H1 (cell line): ENCODE measurements at regions of chr19 and their contacts with region 1.

Region 1: DNA sequence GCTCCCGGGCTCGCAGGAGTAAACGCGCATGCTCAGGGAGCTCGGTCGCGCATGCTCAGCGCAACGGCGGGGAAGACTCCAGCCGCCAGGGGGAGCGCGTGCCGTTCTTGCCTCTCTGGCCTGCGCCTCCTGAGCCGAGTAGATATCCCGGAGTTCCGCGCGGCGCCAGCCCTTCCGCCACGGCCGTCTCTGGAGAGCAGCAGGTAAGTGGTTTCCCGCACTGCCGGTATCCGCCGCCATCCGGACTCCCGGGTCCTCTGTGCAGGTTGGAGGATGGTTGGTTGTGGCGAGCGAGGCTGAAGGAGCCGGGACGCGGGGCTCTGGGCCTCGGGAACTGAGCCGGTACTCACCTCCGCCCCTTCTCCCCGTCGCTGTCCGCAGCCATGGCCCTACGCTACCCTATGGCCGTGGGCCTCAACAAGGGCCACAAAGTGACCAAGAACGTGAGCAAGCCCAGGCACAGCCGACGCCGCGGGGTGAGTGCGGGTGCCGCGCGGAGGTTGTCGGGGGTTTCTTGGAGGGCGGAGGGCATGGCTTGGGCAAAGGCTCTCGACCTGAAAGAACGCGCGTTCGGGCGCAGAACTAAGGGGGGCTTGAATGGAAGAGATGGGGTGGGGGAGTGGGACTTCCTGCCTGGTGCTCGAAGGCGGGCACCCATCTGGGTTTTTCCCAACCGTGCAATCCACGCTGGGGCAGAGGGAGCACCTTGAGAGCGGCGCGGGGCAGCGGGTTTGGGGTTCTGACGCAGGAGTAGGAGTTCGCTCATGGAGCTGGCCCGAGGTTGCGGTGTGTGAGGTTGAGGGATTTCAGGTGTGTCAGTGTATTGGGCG is at the start of gene RPL36:
- DNase-seq: peak; percentile 90 to 100
- H3K4me3 ChIP-seq: peak within 1 kb of the TSS; percentile 64 to 99 (median 83)
- H3K27ac ChIP-seq: peak within 1 kb of the TSS; percentile 89
- H3K4me1 ChIP-seq: peaks cover 0 to 4% (median 1%) of the 10 kb centered on the region in 4 experiments; a peak in 3 of 7 replicates
- H3K27me3 ChIP-seq: no peaks in the 10 kb centered on the region
- CTCF ChIP-seq: peak; percentile 93 to 100 (median 99)
- EP300 ChIP-seq: no peak; a peak in 1 of 3 replicates
- POLR2A ChIP-seq: peak; percentile 97 to 99
- RAD21 ChIP-seq: peak; percentile 27 to 33; a peak in 3 of 4 replicates
- total RNA-seq, gene RPL36: 1,075 and 1,137 TPM in 2 replicates

Region 2: DNA sequence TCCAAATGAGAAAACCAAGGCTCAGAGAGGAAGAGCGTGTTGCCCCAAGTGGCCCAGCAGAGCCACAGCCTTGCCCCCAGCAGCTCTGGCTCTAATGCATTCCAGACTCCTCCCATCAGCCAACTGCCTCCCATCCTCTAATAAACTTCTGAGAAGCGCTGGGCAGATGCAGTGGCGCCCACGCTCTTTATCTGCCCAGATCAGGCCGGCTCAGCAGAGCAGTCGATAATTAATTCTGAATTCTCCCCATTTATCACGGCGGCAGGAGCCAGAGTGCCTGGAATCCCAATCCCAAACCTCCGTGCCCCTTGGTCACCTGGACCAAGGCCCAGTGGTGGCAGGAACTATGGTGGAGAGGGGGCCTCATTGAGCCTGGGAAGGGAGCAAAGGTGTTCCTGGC is 136.4 kb before region 1 on chr19:
- CTCF ChIA-PET with region 1: no interaction called
- POLR2A ChIA-PET with region 1: no interaction called
- DNase-seq: no peak
- H3K4me3 ChIP-seq: no peak overlapping the region
- H3K27ac ChIP-seq: no peak overlapping the region
- H3K4me1 ChIP-seq: peaks cover 0 to 2% (median 0%) of the 10 kb centered on the region in 4 experiments; a peak in 2 of 7 replicates
- H3K27me3 ChIP-seq: no peaks in the 10 kb centered on the region
- CTCF ChIP-seq: no peak
- EP300 ChIP-seq: no peak
- POLR2A ChIP-seq: no peak
- RAD21 ChIP-seq: no peak

Region 3: DNA sequence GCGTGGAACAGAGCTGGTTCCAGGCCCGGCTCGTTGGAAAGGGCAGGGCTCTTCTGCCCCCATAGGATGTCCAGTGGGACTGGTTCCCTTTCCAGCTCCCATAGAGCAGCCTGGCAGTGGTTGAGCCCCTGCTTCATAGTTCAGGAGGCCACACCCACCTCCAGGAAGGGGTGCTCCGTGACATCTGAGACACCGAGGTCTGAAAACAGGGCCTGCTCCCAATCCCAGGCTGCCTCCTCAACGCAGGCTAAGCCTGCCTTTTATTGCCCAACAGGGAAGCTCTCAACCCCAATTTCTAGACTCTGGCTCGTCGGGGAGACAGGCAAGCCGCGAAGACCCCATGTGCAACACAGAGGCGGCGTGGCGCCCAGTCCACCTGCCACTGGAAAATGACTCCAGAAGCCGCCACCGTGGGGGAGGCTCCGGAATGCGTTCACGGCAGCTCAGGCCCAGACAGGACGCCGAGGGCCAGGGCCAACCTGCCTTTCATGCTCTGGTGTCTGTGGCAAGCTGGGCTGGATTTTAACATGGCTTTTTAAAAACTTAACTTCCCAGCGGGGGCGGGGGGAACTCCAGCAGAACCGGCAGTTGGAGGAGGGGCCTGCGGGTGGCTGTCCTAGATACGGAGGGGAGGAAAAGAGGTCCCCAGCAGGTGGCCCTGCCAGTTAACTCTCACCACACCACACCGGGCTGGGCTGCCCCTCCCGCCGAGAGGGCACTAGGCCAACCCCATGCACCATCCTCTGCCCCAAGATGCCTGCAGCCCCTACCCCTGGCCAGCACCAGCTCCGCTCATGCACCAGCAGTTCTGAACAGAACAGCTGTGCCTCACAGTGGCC is 104.7 kb before region 1 on chr19:
- CTCF ChIA-PET with region 1: no interaction called
- POLR2A ChIA-PET with region 1: interaction called, 16 read pairs
- DNase-seq: peak in 1 of 2 experiments; percentile 85
- H3K4me3 ChIP-seq: peak overlapping the region in 3 of 4 experiments; percentile 6 to 52 (median 24); a peak in 4 of 8 replicates
- H3K27ac ChIP-seq: no peak overlapping the region; the same call in 1 of the 2 replicates
- H3K4me1 ChIP-seq: peaks cover 0 to 21% (median 16%) of the 10 kb centered on the region in 4 experiments; a peak in 6 of 7 replicates
- H3K27me3 ChIP-seq: no peaks in the 10 kb centered on the region
- CTCF ChIP-seq: no peak
- EP300 ChIP-seq: no peak
- POLR2A ChIP-seq: no peak
- RAD21 ChIP-seq: no peak

Region 4: DNA sequence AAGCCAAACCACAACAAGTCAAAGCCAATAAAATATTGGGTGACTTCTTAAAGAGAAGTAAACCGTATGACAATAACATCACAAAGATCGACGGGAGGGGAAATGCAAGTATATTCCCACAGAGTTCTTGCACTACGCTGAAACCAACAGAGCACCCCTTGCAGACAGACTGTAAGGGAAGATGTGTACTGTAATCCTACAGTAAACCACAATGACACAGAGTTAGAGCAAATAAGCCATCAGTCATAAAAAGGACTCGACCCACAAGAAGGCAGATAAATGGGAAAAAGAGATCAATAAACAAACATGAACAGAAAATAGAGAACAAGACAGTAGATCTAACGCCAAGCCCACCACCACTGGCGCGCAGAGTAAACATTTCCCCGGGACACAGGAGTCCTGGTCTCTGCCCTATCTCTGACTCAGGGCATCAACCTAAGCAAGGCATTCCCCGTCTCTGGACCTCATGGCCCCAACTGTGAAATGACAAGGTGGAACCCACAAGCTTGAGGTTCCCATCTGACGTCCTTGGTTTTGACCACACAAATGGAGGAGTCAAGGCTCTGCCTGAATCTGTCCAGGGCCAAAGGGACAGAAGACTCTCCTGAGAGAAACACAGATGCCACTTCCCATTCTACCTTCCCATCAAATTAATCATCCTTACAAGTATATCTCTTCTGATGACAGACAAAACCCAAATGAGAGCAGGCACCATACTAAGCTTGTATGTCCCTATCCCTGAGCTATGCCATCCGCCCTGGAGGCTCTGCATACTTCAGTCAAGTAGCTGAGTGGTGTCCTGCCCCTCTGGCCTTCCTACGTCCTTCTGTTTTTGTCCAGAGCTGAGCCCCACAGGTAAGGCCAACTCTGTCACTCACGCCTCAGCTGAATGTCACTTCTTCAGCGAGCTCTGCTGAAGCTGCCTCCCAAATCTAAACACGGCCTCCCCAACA is 82.7 kb before region 1 on chr19:
- CTCF ChIA-PET with region 1: no interaction called
- POLR2A ChIA-PET with region 1: no interaction called
- DNase-seq: no peak
- H3K4me3 ChIP-seq: no peak overlapping the region
- H3K27ac ChIP-seq: no peak overlapping the region
- H3K4me1 ChIP-seq: no peaks in the 10 kb centered on the region
- H3K27me3 ChIP-seq: no peaks in the 10 kb centered on the region
- CTCF ChIP-seq: no peak
- EP300 ChIP-seq: no peak
- POLR2A ChIP-seq: no peak
- RAD21 ChIP-seq: no peak

Region 5: GRCh38 chr19:5665796-5666513 is 24.4 kb before region 1 on chr19:
- CTCF ChIA-PET with region 1: interaction called, 11 read pairs
- POLR2A ChIA-PET with region 1: interaction called, 16 read pairs
- DNase-seq: no peak
- H3K4me3 ChIP-seq: no peak overlapping the region
- H3K27ac ChIP-seq: no peak overlapping the region
- H3K4me1 ChIP-seq: peaks cover 0 to 9% (median 5%) of the 10 kb centered on the region in 4 experiments; a peak in 5 of 7 replicates
- H3K27me3 ChIP-seq: no peaks in the 10 kb centered on the region
- CTCF ChIP-seq: peak in 1 of 3 experiments; percentile 15; a peak in 1 of 4 replicates
- EP300 ChIP-seq: no peak
- POLR2A ChIP-seq: no peak
- RAD21 ChIP-seq: no peak

Region 6: GRCh38 chr19:5707576-5708575 is 17.5 kb after region 1 on chr19:
- CTCF ChIA-PET with region 1: interaction called, 23 read pairs
- POLR2A ChIA-PET with region 1: interaction called, 620 read pairs
- DNase-seq: no peak
- H3K4me3 ChIP-seq: no peak overlapping the region
- H3K27ac ChIP-seq: no peak overlapping the region
- H3K4me1 ChIP-seq: no peaks in the 10 kb centered on the region
- H3K27me3 ChIP-seq: no peaks in the 10 kb centered on the region
- CTCF ChIP-seq: no peak
- EP300 ChIP-seq: no peak
- POLR2A ChIP-seq: no peak; a peak in 1 of 3 replicates
- RAD21 ChIP-seq: no peak

Region 7: GRCh38 chr19:5738426-5738825 is 48.1 kb after region 1 on chr19:
- CTCF ChIA-PET with region 1: interaction called, 3 read pairs
- POLR2A ChIA-PET with region 1: interaction called, 11 read pairs
- DNase-seq: no peak
- H3K4me3 ChIP-seq: no peak overlapping the region
- H3K27ac ChIP-seq: no peak overlapping the region
- H3K4me1 ChIP-seq: no peaks in the 10 kb centered on the region
- H3K27me3 ChIP-seq: no peaks in the 10 kb centered on the region
- CTCF ChIP-seq: no peak
- EP300 ChIP-seq: no peak
- POLR2A ChIP-seq: no peak
- RAD21 ChIP-seq: no peak

Region 8: DNA sequence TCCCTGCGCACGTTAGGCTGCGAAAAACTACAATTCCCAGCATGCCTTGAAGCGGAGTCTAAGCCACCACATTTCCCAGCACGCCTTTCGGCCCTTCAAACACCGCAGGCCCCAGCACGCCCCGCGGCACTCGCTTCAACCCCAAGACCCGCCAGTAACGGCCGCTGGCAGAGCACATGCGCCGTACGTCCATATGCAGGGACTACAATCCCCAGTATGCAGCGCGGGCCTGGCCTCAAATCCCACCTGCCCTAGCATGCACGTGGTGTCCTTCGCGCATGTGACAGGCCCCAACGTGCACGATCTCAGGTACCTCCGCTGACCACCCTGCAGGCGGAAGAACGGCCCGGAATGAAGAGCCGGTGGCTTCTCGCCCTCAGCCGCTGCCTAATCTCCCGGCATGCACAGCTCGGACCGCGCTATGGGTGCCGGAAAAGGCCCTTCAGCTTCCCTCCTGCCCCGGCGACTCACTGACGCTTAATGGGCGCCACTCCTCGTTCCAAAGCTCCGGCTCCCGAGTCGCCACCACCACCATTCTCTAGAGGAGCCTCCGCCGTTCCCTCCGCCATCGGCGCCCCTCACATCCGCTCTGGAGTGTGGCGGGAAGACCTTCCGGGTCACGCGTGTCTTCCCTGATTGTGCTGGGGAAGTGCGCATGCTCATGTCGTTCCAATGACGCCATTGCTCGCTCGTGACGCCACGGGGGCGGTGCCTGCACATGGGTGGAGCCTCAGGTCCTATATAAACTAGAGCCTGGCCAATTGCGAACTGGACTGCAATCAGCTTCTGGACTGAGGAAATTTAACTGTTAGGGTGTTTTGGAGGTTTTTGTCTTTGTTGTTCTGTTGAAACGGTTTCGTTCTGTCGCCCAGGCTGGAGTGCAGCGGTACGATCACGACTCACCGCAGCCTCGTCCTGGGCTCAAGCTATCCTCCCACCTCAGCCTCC is 100.5 kb after region 1 on chr19 and contains the start of gene DUS3L:
- CTCF ChIA-PET with region 1: interaction called, 6 read pairs
- POLR2A ChIA-PET with region 1: interaction called, 18 read pairs
- DNase-seq: peak; percentile 94 to 95
- H3K4me3 ChIP-seq: peak within 1 kb of the TSS; percentile 77 to 92 (median 82)
- H3K27ac ChIP-seq: peak within 1 kb of the TSS; percentile 91
- H3K4me1 ChIP-seq: no peaks in the 10 kb centered on the region; a peak in 1 of 7 replicates
- H3K27me3 ChIP-seq: no peaks in the 10 kb centered on the region
- CTCF ChIP-seq: no peak
- EP300 ChIP-seq: no peak
- POLR2A ChIP-seq: peak in 1 of 2 experiments; percentile 87; a peak in 2 of 3 replicates
- RAD21 ChIP-seq: no peak
- total RNA-seq, gene DUS3L: 39.1 and 39.4 TPM in 2 replicates